Gastrocnemius medialis (tissue), 4 donors: ENCODE measurements at regions of chr16 and their contacts with region 1.

Region 1: GRCh38 chr16:89171463-89172170 is at the start of gene CDH15:
- DNase-seq: peak; percentile 96 to 99
- ATAC-seq: peak; percentile 71 to 82
- H3K4me3 ChIP-seq: peak within 1 kb of the TSS; percentile 74 to 94 (median 78)
- H3K27ac ChIP-seq: peak within 1 kb of the TSS; percentile 91 to 99 (median 96)
- H3K4me1 ChIP-seq: peaks cover 38 to 52% of the 10 kb centered on the region in 2 donors
- H3K27me3 ChIP-seq: peaks cover 4 to 11% (median 8%) of the 10 kb centered on the region in 3 donors
- CTCF ChIP-seq: no peak
- POLR2A ChIP-seq: peak; percentile 89 to 96
- total RNA-seq, gene CDH15: 48.5 to 60.8 (median 51.0) TPM

Region 2: DNA sequence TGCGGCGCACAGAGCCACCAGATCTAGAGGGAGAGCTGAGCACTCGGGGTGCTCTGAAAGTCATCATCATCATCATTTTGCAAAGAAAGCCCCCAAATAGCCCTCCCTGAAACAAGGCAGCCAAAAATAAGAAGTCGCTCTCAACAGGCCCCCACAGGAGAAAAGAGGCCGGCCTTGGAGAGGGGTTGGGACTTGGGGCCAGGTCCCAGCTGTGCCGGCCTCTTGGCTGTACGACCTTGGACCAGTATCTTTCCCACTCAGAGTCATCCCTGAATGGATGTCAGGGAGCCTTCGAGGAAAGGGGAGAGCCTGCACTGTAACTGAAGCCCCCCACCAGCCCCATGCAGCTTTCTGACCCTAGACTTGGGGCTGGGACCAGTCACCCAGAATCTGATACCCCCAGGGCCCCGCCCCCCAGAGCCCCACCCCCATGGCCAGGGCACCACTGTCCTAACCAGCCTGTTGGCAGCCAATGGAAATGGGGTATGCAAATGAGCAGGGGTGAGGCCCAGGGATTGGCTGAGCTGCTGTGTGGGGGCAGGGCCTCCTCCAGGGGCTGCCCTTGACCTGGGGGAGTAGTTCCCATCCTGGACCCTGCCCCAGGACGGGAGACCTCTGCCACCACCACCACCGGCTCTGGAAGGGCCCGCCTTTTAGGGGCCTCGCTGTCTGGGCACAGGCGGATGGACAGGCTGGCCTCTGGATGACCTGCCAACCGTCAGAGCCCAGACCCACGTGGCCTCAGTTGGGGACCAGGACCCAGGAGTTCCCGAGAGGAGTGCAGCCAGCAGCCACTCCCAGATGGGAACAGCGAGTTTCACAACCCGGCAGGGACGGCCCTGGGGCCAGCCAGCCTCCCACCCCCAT is 703.1 kb before region 1 on chr16:
- in situ Hi-C with region 1: no loop called
- intact Hi-C with region 1: loop called (anchors 10 kb)
- DNase-seq: peak in 1 of 2 donors; percentile 23
- ATAC-seq: peak in 1 of 2 donors; percentile 64
- H3K4me3 ChIP-seq: no peak overlapping the region
- H3K27ac ChIP-seq: no peak overlapping the region
- H3K4me1 ChIP-seq: no peaks in the 10 kb centered on the region
- H3K27me3 ChIP-seq: peaks cover 0 to 7% (median 4%) of the 10 kb centered on the region in 3 donors
- CTCF ChIP-seq: no peak
- POLR2A ChIP-seq: no peak

Region 3: DNA sequence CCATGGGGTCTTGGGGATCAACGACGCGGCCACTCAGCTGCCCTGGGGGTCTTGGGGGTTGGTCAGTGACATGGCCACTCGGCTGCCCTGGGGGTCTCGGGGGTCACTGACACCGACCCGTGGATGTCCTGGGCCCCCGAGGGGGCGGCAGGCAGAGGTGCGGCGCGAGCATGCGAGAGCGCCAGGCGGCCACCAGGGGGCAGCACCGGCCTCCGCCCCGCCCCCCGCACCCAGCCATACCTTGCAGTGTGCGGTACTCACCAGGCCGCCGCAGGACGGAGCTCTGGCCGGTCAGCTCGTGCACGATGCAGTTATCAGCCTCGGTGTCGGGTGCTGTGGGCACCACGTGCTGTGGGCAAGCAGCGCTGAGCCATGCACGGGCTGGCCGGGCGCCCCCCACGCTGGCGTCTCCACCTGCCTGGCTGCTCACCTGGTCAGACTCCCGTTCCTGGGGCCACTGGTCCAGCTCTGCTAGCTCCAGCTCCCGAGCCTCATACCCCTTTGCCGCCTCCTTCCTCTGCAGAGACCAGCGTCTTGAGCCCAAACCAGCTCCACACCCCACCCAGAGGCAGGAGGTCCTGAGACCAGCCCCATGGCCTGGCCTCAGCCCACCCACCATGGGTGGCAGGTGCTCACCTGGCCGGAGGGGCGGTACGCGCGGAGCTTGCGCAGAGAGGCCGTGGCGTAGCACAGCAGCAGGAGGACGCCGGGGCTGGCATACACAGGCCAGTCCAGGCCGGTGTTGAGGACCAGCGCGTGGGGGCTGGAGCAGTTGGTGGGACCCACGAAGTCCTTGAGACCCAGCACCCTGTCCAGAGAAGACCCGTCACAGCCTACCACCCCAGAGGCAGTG is 434.1 kb before region 1 on chr16:
- in situ Hi-C with region 1: no loop called
- intact Hi-C with region 1: loop called (anchors 1 kb)
- DNase-seq: peak; percentile 29 to 67
- ATAC-seq: peak; percentile 61 to 71
- H3K4me3 ChIP-seq: no peak overlapping the region
- H3K27ac ChIP-seq: no peak overlapping the region
- H3K4me1 ChIP-seq: peaks cover 0 to 7% of the 10 kb centered on the region in 2 donors
- H3K27me3 ChIP-seq: no peaks in the 10 kb centered on the region
- CTCF ChIP-seq: peak; percentile 91 to 98 (median 97)
- POLR2A ChIP-seq: no peak

Region 4: GRCh38 chr16:88856828-88857733 is 314.5 kb before region 1 on chr16 and contains the starts of genes GALNS and TRAPPC2L:
- in situ Hi-C with region 1: no loop called
- intact Hi-C with region 1: loop called (anchors 1 kb)
- DNase-seq: peak; percentile 97
- ATAC-seq: peak; percentile 92 to 95
- H3K4me3 ChIP-seq: peak within 1 kb of the TSS; percentile 91 to 99 (median 94)
- H3K27ac ChIP-seq: peak within 1 kb of the TSS; percentile 89 to 92 (median 90)
- H3K4me1 ChIP-seq: peaks cover 16 to 17% of the 10 kb centered on the region in 2 donors
- H3K27me3 ChIP-seq: no peaks in the 10 kb centered on the region
- CTCF ChIP-seq: peak in 2 of 5 experiments; percentile 44 to 54
- POLR2A ChIP-seq: peak; percentile 79 to 81
- total RNA-seq, gene GALNS: 8.8 to 14.7 (median 10.0) TPM
- total RNA-seq, gene TRAPPC2L: 17.8 to 27.9 (median 20.5) TPM

Region 5: DNA sequence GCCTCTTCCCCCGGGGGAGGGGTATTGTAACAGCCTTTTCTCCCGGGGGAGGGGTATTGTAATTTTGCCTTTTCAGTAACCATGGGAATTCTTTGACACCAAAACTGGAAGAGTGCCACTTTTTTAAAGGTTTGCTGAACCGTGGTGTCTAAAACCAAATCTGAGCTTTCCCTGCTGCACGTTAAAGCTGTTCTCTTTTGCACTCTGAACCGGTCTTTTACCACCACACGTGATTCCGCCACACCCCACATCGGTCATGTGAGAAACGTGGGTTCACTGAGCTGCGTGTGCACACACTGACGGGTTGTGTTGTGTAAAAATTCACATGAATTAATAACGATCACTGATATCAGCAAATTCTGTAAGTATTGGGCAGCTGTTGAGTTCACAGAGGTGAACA is 87.2 kb before region 1 on chr16:
- in situ Hi-C with region 1: no loop called
- intact Hi-C with region 1: no loop called
- DNase-seq: no peak
- ATAC-seq: no peak
- H3K4me3 ChIP-seq: no peak overlapping the region
- H3K27ac ChIP-seq: no peak overlapping the region
- H3K4me1 ChIP-seq: no peaks in the 10 kb centered on the region
- H3K27me3 ChIP-seq: peaks cover 47 to 53% (median 48%) of the 10 kb centered on the region in 3 donors
- CTCF ChIP-seq: no peak
- POLR2A ChIP-seq: no peak

Region 6: GRCh38 chr16:89201439-89202377 is 30.1 kb after region 1 on chr16:
- in situ Hi-C with region 1: no loop called
- intact Hi-C with region 1: loop called (anchors 2 kb)
- DNase-seq: peak; percentile 38 to 67
- ATAC-seq: peak; percentile 59 to 69
- H3K4me3 ChIP-seq: peak overlapping the region in 2 of 4 donors; percentile 28 to 35
- H3K27ac ChIP-seq: no peak overlapping the region
- H3K4me1 ChIP-seq: no peaks in the 10 kb centered on the region
- H3K27me3 ChIP-seq: peaks cover 68 to 71% (median 70%) of the 10 kb centered on the region in 3 donors
- CTCF ChIP-seq: no peak
- POLR2A ChIP-seq: no peak

Region 7: DNA sequence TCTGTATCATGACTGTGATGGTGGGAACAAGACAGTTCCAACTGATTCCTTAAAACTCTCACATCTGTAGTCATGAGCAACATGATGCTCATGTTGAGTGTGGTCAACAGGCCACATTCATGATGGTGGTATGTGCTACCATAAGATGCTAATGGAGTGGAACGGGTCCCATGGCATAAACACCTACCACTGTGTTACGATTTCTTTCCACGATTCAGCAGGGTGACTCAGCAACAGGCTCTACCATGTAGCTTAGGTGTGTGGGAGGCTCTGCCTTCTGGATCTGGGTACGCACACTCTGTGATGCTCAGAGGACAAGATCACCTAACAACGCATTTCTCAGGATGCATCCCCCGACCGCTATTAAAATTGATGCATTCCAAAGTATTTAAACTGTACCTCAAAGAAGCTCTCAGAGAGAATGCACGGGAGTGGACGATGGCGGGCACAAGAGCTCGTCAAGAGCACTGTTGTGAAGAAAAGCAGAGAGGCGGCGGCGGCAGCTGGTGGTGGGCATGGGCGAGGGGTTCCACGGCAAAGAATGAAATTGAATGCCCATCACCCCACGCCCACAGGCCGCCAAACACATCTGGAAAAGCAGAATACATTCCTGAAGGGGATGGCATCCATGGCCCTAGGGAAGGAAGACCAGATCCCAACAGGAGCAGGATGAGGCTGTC is 179.2 kb after region 1 on chr16:
- in situ Hi-C with region 1: no loop called
- intact Hi-C with region 1: no loop called
- DNase-seq: no peak
- ATAC-seq: no peak
- H3K4me3 ChIP-seq: no peak overlapping the region
- H3K27ac ChIP-seq: peak overlapping the region in 2 of 4 donors; percentile 5 to 23
- H3K4me1 ChIP-seq: peaks cover 35 to 45% of the 10 kb centered on the region in 2 donors
- H3K27me3 ChIP-seq: no peaks in the 10 kb centered on the region
- CTCF ChIP-seq: no peak
- POLR2A ChIP-seq: no peak